Tibial artery (tissue), 4 donors: ENCODE measurements at regions of chr3 and their contacts with region 1.

Region 1: GRCh38 chr3:124014366-124014942 is 22.5 kb upstream of the ROPN1 start:
- DNase-seq: no peak
- H3K4me3 ChIP-seq: no peak overlapping the region
- H3K27ac ChIP-seq: peak overlapping the region; percentile 21 to 56
- H3K4me1 ChIP-seq: peaks cover 0 to 36% (median 6%) of the 10 kb centered on the region in 4 donors
- H3K27me3 ChIP-seq: no peaks in the 10 kb centered on the region
- CTCF ChIP-seq: no peak

Region 2: DNA sequence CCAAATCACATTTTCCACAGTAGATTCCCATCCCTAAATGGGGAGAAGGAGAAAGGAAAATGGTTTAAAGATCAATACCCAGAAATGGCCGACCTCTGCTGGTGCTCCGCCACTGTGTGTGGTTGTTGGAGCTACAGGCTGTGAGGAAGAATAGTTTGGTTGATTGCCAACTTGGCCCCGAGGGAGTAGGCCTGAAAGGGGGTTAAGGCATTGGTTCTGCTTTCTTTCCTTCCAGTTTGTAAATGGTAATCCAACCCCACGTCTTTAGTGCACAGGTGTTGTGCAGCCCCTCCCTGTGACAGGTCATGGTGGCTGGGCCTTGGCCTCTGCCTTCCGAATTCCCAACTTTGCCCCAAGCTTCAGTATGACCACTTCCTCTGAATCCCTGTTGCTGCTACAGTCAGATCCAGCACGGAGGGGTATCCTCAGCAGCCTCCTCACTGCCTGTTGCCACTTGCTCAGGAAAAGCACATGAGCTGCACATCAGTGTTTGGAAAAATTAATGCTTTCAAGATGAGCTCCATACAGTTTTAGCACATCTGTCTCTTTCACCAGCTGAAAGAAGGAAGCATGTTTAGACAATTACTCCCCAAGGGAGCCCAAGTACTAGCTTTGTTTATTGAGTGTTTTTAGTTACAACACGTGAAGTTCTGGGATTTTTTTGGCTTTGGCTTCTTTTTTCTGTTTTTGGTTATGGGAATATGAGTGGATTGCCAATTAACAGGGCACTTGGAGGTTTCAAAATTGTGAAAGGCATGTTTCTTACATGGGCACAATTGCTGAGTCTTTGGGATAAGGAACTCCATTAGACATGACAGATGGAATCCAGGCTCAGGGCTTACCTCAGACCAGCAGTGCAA is 69.8 kb after region 1 on chr3:
- intact Hi-C with region 1: loop called (anchors 5 kb)
- DNase-seq: no peak
- H3K4me3 ChIP-seq: no peak overlapping the region
- H3K27ac ChIP-seq: peak overlapping the region; percentile 64 to 72
- H3K4me1 ChIP-seq: peaks cover 0 to 61% (median 20%) of the 10 kb centered on the region in 4 donors
- H3K27me3 ChIP-seq: no peaks in the 10 kb centered on the region
- CTCF ChIP-seq: no peak

Region 3: DNA sequence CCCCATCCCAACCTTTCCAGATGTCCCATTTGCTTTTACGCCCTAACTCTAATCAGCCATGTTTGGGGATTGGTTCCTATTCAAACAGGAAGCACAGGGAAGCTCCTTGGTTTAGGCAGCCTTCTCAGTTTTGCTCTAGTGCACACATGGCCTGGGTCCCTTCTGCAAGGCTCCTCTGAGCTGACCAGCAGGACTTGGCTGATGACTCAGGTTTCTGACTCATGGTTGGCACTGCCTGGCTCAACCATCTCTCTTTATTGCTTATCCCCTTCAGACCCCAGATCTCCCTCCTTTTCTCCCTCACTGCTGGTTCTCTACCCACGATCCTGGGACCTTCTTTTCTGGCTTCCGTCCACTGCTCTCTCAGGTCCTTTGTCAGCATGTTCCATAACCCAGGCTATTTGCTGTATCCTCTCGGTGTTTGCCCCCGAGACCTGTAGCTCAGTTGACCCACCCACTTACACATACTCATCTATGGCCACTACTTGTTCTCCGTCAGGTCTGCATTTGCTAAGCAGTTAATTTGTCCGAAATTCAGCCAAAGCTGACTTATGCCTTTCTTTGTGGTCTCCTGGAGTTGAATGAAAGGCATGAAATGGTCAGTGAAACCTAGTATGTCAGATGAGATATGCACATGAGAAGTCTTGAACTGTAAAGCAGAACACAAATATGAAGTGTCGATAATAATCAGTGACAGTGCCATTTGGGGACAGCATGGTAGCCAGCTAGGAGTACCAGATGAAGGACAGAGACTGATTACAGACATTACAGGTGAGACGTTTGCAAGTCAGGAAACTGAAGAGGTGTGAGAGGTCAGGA is 301.0 kb after region 1 on chr3:
- intact Hi-C with region 1: no loop called
- DNase-seq: peak in 1 of 2 donors; percentile 76
- H3K4me3 ChIP-seq: no peak overlapping the region
- H3K27ac ChIP-seq: no peak overlapping the region
- H3K4me1 ChIP-seq: peaks cover 0 to 24% (median 7%) of the 10 kb centered on the region in 4 donors
- H3K27me3 ChIP-seq: no peaks in the 10 kb centered on the region
- CTCF ChIP-seq: no peak